ENCODE measurements at regions of chr2 and their contacts with region 1.

Region 1: DNA sequence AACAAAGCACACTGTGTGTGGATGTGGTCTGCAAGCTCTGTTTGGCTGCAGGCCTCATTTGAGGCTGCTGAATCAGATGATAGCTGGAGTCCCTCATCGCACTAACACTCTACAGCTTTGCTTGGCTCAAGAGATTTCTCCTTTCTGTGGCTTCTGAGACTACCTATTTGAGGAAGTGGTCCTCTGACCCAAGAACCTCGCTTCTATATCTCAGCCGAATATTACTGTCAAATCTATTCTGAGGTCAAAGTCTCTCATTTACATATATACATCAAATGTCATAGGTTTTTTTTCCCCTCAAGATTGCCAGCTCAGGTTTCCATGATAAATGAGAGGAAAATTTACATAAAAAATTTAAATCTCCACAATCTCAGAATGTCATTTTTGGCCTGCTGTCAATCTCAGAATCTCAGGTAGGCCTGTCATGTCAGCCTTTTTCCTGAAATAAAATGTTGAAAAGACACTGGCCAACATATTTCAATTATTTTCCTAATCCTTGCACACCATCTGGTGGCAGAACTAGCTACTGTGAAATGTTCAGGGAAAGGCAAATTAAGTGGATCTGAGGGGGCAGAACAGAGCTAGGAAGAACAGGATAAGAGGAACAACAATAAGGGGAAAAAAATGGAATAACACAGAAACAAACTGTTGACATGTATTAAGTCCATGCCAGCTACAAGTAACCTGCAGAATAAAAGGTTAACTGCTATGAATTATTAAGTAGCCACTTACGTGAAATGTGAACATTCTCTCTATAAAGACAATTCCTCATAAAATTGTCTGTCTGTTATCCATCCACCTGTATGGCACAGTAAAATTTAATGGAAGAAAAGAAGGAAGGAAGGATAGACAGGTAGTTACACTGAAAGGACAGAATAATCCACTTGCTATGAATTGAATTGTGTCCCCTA is 39.3 kb downstream of the AP1S3 start:
- DNase-seq: no peak

Region 2: DNA sequence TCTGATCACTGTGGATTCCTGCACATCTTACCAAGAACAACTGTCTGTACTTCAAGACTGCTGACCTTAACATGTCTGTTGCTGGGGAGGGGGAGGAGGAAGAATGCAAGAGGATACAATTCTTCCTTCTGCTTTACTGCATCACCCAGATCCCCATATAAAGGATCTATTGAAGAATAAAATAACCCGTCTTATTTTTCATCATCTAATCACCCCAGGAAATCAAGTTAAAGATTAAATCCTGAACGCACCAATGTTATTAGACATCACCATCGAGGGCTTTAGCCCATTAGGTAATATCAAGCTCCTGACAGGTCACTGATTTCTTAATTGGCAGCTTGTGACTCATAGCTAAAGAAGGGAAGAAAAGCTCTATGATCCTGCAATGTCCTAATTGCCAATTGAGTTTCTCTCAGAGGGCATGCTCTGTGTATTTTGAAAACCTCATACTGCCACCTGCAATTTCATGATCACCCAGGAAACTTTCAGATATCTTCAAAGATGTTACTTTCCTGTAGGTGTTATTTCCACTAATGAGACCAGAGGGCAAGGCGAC is 821.5 kb before region 1 on chr2:
- intact Hi-C with region 1: loop called (anchors 5 kb)
- DNase-seq: no peak

Region 3: DNA sequence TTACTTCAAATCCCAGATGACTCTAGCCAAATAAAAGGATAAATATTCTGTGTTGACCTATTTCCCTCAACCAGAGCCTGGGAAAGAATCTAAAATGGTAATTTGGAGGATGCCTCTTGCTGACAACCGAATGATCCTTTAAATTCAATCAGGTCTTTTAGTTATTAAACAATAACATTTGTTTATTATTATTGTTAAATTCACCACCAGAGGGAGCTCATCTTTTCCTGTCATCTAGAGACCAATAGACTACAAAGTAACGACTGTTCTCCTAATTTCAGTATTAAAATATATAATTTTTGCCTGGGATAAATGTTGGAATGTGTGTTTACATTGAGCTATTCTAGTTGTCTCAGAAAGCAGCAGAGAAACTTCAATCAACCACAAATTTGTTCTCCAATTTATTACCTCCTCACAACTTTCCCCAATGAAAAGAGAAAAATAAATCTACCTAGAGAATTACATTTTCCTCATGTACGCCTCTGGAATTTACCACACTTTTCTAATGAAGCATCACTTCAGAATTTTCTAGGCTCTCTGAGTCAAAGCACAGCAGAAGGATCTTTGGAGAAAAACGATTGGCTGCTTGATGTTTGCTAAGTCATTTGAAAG is 338.6 kb before region 1 on chr2:
- intact Hi-C with region 1: loop called (anchors 10 kb)
- DNase-seq: no peak

Region 4: DNA sequence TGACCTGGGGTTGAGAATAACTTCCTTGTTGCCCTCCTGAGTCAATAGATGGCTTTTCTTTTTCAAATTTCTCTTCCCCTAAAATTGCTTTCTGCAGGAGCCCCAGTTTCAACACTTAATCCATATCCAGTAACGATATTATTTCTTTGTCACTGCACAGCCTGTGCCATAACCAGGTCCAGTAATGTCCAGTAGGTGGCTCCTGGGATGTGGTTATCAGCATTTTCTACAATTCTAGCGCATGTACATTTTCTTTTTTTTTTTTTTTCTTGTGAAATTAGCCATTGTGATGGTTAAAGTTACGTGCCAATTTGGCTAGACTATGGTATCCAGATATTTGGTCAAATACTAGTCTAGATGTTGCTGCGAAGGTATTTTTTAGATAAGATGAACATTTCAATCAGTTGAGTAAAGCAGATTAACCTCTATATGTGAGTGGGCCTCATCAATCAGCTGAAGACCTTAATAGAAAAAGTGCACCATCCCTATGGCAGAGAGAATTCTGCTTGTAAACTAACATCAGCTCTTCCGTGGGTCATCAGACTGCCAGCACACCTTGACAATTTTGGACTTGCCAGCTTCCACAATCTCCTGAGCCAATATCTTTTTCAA is 123.0 kb before region 1 on chr2:
- intact Hi-C with region 1: loop called (anchors 5 kb)
- DNase-seq: no peak

Region 5: GRCh38 chr2:223692191-223692947 is 105.7 kb before region 1 on chr2:
- intact Hi-C with region 1: loop called (anchors 1 kb)
- DNase-seq: no peak

Region 6: DNA sequence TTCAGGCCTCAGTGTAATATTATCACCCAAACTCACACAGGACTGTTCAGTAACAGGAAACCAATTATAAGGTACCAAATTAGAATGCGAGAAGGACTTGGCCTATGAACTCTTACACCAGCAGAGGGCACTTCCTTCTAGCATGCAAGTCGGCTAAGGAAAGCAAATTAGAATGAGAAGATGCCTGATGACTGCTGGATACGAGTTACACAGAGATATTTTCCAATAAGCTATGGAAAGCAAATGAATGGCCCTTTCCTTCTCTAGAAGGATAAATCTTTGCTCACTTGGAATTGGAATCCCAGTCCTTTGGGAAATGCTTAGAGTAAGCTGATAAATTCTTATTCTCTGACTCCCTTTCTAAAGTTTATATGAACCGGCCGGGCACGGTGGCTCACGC is 70.5 kb before region 1 on chr2:
- intact Hi-C with region 1: no loop called
- DNase-seq: no peak

Measured in cardiac septum (tissue), 1 donor.